Posterior cingulate gyrus (tissue), 11 donors: ENCODE measurements at regions of chr1 and their contacts with region 1.

Region 1: DNA sequence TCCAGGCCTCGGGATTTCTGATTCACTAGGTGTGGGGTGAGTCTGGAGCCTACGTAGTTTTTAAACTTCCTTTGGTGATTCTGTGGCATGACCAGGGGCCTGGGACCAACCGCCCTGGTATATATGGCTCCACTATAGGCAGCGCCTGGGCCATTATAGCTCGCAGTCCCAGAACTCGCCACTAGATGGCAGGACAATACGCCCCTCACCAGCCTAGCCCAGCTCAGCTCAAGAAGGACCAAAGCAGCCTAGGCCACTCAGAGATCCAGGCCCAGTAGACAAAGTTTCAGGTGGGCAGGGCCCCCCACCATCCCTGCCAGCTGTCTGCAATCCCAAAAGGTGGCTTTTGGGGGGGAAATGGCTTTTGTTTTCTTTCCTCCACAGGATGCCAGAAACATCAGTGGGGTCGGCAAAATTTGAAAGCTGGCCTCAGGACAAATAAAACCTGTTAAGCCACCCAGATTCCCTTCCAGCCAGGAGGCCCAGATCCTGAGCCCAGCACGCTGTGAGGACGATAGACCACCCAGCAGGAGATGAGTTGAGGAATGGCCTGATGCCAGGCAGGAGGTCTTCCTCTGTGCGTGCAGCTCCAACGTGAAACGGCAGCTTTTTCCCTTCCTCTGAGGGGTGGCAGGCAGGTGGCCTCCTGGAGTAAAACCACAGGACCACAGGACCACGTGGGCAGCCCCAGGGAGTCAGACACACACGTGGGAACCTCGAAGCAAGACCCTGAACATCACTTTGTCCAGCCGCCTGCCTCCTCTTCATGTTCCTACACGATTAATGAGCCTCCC is 24.8 kb upstream of the TMEM51 start:
- DNase-seq: peak in 8 of 10 donors; percentile 32 to 92 (median 66)

Region 2: DNA sequence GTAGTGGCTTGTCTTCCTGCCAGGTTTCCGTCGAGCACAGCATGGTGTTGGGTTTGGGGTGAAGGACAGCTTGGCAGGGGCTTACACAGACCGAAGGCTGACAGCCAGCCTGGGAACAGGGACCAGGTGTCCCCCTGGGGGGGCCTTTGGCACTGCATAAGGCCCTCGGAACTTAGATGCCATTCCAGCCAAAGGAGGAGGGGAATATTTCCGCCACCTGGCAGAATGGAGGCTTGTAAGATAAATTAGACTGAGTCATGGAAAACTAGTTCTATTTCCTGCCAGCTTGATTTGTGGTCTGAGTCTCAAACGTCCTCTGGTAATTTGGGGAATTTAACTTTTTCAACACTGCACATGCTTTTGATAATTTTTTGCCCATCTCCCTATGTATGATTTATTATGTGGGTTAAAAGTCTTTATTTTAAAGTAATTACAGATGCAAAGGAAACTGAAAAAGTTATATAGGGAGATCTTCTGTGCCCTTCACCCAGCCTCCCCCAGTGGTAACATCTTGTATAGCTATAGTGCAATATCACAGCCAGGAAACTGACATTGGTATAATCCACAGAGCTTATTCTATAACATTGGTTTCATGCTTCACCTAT is 13.3 kb after region 1 on chr1:
- intact Hi-C with region 1: no loop called
- DNase-seq: no peak

Region 3: GRCh38 chr1:15272009-15272788 is 143.5 kb after region 1 on chr1:
- intact Hi-C with region 1: loop called (anchors 10 kb)
- DNase-seq: peak in 9 of 10 donors; percentile 26 to 88 (median 53)

Region 4: GRCh38 chr1:15304701-15305467 is 176.2 kb after region 1 on chr1:
- intact Hi-C with region 1: loop called (anchors 2 kb)
- DNase-seq: peak in 8 of 10 donors; percentile 57 to 91 (median 62)

Region 5: DNA sequence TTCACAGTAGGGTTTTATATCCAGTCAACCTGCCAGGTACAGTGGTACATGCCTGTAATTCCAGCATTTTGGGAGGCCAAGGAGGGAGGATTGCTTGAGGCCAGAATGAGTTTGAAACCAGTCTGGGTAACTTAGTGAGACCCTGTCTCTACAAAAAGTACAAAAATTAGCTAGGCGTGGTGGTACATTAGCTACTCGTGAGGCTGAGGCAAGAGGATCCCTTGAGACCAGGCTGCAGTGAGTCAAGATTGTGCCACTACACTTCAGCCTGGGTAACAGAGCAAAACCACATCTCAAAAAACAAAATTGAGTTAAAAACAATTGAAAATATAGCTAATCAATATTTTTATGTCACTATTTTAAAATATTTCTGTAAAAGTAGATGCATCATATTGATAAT is 521.7 kb after region 1 on chr1:
- intact Hi-C with region 1: no loop called
- DNase-seq: no peak